Posterior vena cava (tissue), 2 donors: ENCODE measurements at regions of chr4 and their contacts with region 1.

Region 1: GRCh38 chr4:90254357-90254756 is 127.2 kb downstream of the CCSER1 start:
- DNase-seq: peak; percentile 8

Region 2: DNA sequence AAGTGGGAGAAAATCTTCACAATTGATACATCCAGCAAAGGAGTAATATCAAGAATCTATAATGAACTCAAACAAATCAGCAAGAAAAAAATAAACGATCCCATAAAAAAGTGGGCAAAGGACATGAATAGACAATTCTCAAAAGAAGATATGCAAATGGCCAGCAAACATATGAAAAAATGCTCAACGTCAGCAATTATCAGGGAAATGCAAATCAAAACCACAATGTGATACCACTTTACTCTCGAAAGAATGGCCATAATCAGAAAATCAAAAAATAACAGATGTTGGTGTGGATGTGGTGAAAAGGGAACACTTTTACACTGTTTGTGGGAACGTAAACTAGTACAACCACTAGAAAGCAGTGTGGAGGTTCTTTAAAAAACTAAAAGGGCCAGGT is 241.4 kb before region 1 on chr4:
- intact Hi-C with region 1: loop called in 1 of 2 experiments (anchors 5 kb)
- DNase-seq: no peak